ENCODE measurements at regions of chr1 and their contacts with region 1.

Region 1: DNA sequence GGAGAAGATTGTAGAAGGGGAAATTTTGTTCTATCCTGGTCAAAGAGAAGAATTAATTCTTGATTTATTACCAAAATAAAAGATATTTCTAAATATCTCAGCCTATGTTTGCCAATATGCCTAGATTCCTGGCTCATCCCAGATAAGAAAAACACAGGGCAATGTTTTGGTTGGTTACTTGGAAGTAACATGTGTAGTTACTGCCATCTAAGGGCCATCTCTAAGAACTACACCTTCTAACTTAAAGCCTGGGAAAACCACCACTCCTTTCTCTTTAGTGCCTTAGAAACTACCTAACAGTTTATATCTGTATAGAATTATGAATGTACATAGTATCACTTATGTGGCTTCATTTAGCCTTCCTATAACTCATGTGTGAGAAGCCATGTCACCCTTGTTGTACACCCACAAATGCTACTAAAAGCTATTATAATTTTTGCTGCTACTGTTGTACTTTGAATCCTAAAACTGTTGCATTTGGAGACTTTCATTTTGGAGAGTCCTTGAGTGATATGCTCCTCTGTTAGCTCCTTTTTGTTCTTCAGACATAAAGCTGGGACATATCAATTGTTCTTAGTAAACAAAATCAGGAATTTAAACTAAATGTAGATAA is 4.5 kb downstream of the AIM2 start:
- DNase-seq: peak in 1 of 2 donors; percentile 76
- ATAC-seq: peak in 1 of 3 donors; percentile 46
- H3K4me3 ChIP-seq: no peak overlapping the region
- H3K4me3 Mint-ChIP-seq: no peak overlapping the region
- H3K27ac ChIP-seq: no peak overlapping the region
- H3K27ac Mint-ChIP-seq: no peak overlapping the region
- H3K4me1 ChIP-seq: peaks cover 28% of the 10 kb centered on the region
- H3K4me1 Mint-ChIP-seq: peaks cover 19% of the 10 kb centered on the region in 2 donors
- H3K27me3 ChIP-seq: no peaks in the 10 kb centered on the region
- H3K27me3 Mint-ChIP-seq: peaks cover 8 to 9% of the 10 kb centered on the region in 2 donors
- CTCF ChIP-seq: peak; percentile 85

Region 2: GRCh38 chr1:158095737-158096335 is 976.2 kb before region 1 on chr1:
- intact Hi-C with region 1: loop called (anchors 10 kb)
- DNase-seq: peak in 1 of 2 donors; percentile 57
- ATAC-seq: peak; percentile 66 to 84 (median 73)
- H3K4me3 ChIP-seq: no peak overlapping the region
- H3K4me3 Mint-ChIP-seq: no peak overlapping the region
- H3K27ac ChIP-seq: no peak overlapping the region
- H3K27ac Mint-ChIP-seq: no peak overlapping the region
- H3K4me1 ChIP-seq: no peaks in the 10 kb centered on the region
- H3K4me1 Mint-ChIP-seq: no peaks in the 10 kb centered on the region
- H3K27me3 ChIP-seq: no peaks in the 10 kb centered on the region
- H3K27me3 Mint-ChIP-seq: peaks cover 3 to 4% of the 10 kb centered on the region in 2 donors
- CTCF ChIP-seq: peak; percentile 53

Region 3: DNA sequence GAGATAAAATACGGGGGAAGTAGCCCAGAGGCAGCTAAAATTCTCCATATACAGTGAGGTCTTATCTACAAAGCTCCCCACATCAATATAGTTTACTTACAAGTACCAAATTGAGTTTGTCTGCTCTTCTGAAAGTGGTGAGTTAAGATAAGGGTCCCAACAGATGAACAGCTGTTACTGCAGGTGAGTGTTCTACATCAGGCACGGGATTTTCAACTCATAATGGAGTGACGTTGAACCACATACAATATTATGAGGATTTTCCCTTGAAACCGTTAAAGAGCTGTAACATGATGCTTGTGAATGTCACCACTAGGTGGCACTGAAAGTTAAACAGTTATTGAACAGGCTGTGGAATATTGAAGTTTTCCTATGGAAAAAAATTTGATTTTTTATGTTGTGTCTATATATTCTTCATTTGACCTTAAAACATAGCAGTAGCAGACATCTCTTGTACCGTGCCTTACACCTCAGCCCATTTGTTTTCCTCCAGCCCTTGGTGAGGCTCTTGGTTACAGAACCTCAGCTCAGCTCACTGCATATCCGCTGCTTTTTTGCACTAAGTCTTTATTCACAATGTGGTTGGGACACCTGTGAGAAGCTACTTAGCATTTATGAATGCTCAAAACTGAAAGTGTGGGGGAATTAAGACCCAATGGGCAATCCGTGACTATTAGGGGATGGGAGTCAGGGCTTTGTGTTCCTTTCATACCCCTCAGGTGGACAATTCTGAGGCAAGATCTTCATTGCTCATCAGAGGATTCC is 868.2 kb before region 1 on chr1:
- intact Hi-C with region 1: loop called (anchors 1 kb)
- DNase-seq: peak in 1 of 2 donors; percentile 74
- ATAC-seq: peak; percentile 47 to 71 (median 61)
- H3K4me3 ChIP-seq: no peak overlapping the region
- H3K4me3 Mint-ChIP-seq: no peak overlapping the region
- H3K27ac ChIP-seq: no peak overlapping the region
- H3K27ac Mint-ChIP-seq: no peak overlapping the region
- H3K4me1 ChIP-seq: no peaks in the 10 kb centered on the region
- H3K4me1 Mint-ChIP-seq: no peaks in the 10 kb centered on the region
- H3K27me3 ChIP-seq: peaks cover 4% of the 10 kb centered on the region
- H3K27me3 Mint-ChIP-seq: peaks cover 15 to 30% of the 10 kb centered on the region in 2 donors
- CTCF ChIP-seq: peak; percentile 81

Region 4: GRCh38 chr1:158506369-158506987 is 565.6 kb before region 1 on chr1:
- intact Hi-C with region 1: loop called (anchors 1 kb)
- DNase-seq: peak in 1 of 2 donors; percentile 57
- ATAC-seq: peak; percentile 50 to 75 (median 63)
- H3K4me3 ChIP-seq: no peak overlapping the region
- H3K4me3 Mint-ChIP-seq: no peak overlapping the region
- H3K27ac ChIP-seq: no peak overlapping the region
- H3K27ac Mint-ChIP-seq: no peak overlapping the region
- H3K4me1 ChIP-seq: no peaks in the 10 kb centered on the region
- H3K4me1 Mint-ChIP-seq: no peaks in the 10 kb centered on the region
- H3K27me3 ChIP-seq: peaks cover 3% of the 10 kb centered on the region
- H3K27me3 Mint-ChIP-seq: peaks cover 28 to 54% of the 10 kb centered on the region in 2 donors
- CTCF ChIP-seq: peak; percentile 63

Region 5: GRCh38 chr1:158793604-158794003 is 278.5 kb before region 1 on chr1:
- intact Hi-C with region 1: loop called (anchors 10 kb)
- DNase-seq: peak in 1 of 2 donors; percentile 61
- ATAC-seq: peak; percentile 64 to 70 (median 65)
- H3K4me3 ChIP-seq: no peak overlapping the region
- H3K4me3 Mint-ChIP-seq: no peak overlapping the region
- H3K27ac ChIP-seq: no peak overlapping the region
- H3K27ac Mint-ChIP-seq: no peak overlapping the region
- H3K4me1 ChIP-seq: no peaks in the 10 kb centered on the region
- H3K4me1 Mint-ChIP-seq: peaks cover 13% of the 10 kb centered on the region in 2 donors
- H3K27me3 ChIP-seq: no peaks in the 10 kb centered on the region
- H3K27me3 Mint-ChIP-seq: no peaks in the 10 kb centered on the region
- CTCF ChIP-seq: peak; percentile 59

Region 6: DNA sequence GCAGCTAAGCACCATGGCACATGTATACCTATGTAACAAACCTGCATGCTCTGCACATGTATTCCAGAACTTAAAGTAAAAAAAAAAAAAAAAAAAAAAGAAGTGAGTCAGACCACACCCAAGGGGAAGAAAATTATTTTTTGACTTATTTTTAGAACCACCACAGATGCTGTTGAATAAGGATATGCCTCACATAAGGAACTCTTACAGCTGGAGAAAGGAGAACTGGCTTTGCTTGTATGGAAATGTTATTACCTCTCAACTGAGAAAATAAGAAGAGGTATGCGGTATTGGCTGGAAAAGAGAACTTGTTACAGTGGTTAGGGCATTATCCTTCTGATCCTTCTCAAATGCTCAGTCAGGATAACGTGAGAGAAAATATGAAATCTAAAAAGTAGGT is 202.6 kb after region 1 on chr1:
- intact Hi-C with region 1: no loop called
- DNase-seq: no peak
- ATAC-seq: no peak
- H3K4me3 ChIP-seq: no peak overlapping the region
- H3K4me3 Mint-ChIP-seq: no peak overlapping the region
- H3K27ac ChIP-seq: no peak overlapping the region
- H3K27ac Mint-ChIP-seq: no peak overlapping the region
- H3K4me1 ChIP-seq: no peaks in the 10 kb centered on the region
- H3K4me1 Mint-ChIP-seq: no peaks in the 10 kb centered on the region
- H3K27me3 ChIP-seq: no peaks in the 10 kb centered on the region
- H3K27me3 Mint-ChIP-seq: peaks cover 20 to 32% of the 10 kb centered on the region in 2 donors
- CTCF ChIP-seq: no peak